KBM-7 (cell line): ENCODE measurements at regions of chrX and their contacts with region 1.

Region 1: GRCh38 chrX:129726307-129727111 is 12.3 kb upstream of the XPNPEP2 start:
- DNase-seq: peak; percentile 73

Region 2: DNA sequence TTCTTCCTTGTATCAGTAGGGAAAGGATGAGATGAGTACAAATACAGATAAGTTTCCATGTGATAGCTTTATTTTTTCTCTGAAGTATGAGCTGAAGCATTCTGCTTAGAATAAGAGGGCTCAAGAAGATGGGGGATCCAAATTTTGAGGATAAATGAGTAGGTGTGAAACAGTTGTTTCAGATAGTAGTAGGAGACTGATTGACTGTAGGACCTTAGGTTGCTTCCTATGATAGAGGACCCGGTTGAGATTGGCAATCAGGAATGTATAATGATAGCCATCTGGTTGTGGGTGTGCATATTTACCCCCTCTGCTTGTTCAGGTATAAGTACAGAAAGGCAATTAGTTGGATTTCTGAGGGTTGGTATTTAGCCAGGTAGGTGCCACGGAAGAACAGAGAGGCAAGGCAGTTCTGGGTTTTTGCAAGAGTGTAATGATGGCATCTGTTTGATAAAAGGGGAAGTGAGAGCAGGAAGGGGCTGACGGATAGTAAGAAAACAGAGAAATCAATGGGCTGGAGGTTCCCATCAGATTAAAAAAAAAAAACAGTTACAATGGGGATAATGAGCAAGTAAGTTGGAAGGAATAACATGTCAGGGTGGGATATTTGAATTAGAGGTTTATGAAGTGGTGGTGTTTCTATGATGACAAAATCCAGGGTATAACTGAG is 172.8 kb before region 1 on chrX:
- in situ Hi-C with region 1: no loop called
- DNase-seq: peak; percentile 84

Region 3: GRCh38 chrX:129637217-129638109 is 89.0 kb before region 1 on chrX:
- in situ Hi-C with region 1: loop called (anchors 25 kb)
- DNase-seq: peak; percentile 88